Breast epithelium (tissue), 4 donors: ENCODE measurements at regions of chr4 and their contacts with region 1.

Region 1: GRCh38 chr4:105050896-105051295 is 95.8 kb upstream of the TET2 start:
- DNase-seq: no peak
- H3K4me3 ChIP-seq: no peak overlapping the region
- H3K27ac ChIP-seq: no peak overlapping the region
- H3K4me1 ChIP-seq: no peaks in the 10 kb centered on the region
- H3K27me3 ChIP-seq: no peaks in the 10 kb centered on the region
- CTCF ChIP-seq: no peak
- POLR2A ChIP-seq: no peak

Region 2: DNA sequence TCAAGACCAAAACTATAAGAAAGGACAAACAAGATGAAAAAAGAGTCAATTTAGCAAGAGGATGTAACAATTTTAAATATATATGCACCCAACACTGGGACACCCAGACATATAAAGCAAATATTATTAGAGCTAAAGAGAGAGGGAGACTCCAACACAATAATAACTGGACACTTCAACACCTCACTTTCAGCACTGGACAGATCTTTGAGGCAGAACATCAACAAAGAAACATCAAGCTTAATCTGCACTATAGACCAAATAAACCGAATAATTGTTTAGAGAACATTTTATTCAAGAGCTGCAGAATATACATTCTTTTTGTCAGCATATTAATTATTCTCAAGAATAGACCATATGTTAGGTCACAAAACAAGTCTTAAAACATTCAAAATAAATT is 13.9 kb before region 1 on chr4:
- intact Hi-C with region 1: loop called (anchors 1 kb)
- DNase-seq: no peak
- H3K4me3 ChIP-seq: no peak overlapping the region
- H3K27ac ChIP-seq: no peak overlapping the region
- H3K4me1 ChIP-seq: no peaks in the 10 kb centered on the region
- H3K27me3 ChIP-seq: no peaks in the 10 kb centered on the region
- CTCF ChIP-seq: no peak
- POLR2A ChIP-seq: no peak